ENCODE measurements at regions of chr3 and their contacts with region 1.

Region 1: DNA sequence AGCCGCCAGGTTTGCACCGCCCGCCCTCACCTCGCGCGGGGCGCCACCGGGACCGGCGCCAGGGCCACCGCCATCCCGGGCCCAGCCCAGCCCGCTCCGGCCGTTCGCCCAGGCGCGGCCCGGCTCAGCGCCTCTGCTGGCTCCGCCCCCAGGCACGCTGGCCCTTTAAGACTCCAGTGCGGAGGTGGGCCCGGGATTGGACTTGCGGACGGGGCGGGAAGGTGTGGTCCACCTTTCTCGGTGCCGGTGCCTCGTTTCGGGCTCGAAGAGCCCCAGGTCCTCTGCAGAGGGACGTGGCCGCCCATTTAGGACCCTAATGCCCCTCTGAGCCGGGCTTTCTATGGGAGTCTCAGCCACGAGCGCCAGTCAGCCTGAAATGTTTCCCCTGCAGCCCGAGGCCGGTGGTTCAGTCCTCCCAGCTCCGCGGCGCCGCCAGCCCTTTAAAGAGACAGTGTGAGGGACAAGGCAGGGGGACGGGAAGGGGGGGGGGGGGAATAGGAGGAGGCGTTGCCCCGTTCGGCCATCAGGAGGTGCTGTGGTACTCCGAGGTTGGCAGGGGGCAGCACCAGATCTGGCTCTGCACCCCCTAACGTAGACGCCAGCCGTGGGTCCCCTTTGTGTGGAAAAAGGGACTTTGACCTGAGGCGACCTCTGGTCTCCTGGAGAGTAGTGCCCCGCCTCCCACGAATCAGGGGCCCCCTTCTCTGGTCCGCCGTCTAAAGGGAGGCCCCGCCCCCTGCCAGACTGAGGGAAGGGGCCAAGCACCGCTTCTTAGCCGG is 1.0 kb downstream of the HYAL2 start:
- DNase-seq: peak; percentile 90
- ATAC-seq: peak; percentile 79
- H3K4me3 Mint-ChIP-seq: peak overlapping the region; percentile 84
- H3K27ac Mint-ChIP-seq: peak overlapping the region; percentile 85
- H3K4me1 Mint-ChIP-seq: peaks cover 38% of the 10 kb centered on the region
- H3K27me3 Mint-ChIP-seq: no peaks in the 10 kb centered on the region

Region 2: DNA sequence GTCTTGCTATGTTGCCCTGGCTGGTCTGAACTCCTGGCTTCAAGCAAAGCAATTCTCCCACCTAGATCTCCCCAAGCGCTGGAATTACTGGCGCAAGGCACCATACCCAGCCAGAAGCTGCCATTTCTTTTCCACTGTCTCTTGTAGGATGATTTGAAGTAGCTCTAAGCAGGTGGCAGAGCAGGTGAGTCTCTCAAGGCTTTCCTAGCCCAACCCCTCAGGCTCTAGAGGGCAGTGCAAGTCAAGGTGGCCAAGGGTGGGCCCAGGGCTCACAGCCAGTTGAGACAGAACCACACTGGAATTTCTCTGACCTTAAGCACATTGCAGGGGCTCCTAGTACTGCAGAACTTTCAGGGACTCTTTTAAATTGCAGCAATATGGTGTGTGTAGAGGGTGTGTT is 867.1 kb before region 1 on chr3:
- CTCF ChIA-PET with region 1: no interaction called
- POLR2A ChIA-PET with region 1: no interaction called
- intact Hi-C with region 1: no loop called
- DNase-seq: no peak
- ATAC-seq: no peak
- H3K4me3 Mint-ChIP-seq: no peak overlapping the region
- H3K27ac Mint-ChIP-seq: no peak overlapping the region
- H3K4me1 Mint-ChIP-seq: no peaks in the 10 kb centered on the region
- H3K27me3 Mint-ChIP-seq: no peaks in the 10 kb centered on the region

Region 3: DNA sequence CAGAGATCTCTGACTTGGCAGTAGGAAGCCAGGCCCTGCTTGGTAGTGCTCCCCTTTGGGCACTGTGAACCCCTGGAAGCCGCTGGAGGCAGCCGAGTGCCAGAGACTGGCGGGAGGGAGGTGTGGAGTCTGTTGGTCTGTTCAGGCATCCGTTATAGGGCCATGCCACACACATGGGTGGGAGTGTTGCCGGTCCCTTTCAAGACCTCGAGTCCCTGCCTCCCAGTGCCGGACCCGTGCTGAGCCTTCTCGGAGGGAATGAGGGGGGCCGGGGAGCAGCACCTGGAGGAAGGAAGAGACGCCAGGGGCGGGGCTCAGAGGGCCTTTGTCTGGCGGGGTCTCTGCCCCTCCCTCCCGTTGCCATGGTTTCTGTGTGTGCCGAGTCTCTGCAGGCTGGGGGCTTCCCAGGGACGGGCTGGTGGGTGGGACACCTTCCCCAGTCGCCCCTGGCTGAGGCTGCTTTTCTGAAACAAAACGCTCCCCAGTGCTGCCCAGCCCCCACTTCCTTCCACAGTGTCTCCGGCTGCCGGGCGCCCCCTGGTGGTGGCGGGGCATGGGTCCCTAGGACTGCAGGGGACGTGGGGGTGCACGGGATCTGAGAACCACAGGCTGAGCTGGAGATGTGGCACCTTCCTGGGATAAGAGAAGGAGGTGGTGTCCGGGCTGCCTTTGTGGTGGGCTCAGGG is 75.6 kb before region 1 on chr3:
- CTCF ChIA-PET with region 1: interaction called, 8 read pairs
- POLR2A ChIA-PET with region 1: interaction called, 3 read pairs
- intact Hi-C with region 1: loop called in 1 of 2 experiments (anchors 1 kb)
- DNase-seq: peak; percentile 98
- ATAC-seq: peak; percentile 76
- H3K4me3 Mint-ChIP-seq: peak overlapping the region; percentile 75
- H3K27ac Mint-ChIP-seq: peak overlapping the region; percentile 95
- H3K4me1 Mint-ChIP-seq: peaks cover 84% of the 10 kb centered on the region
- H3K27me3 Mint-ChIP-seq: no peaks in the 10 kb centered on the region

Region 4: GRCh38 chr3:50272911-50273693 is 48.4 kb before region 1 on chr3:
- CTCF ChIA-PET with region 1: interaction called, 3 read pairs
- POLR2A ChIA-PET with region 1: no interaction called
- intact Hi-C with region 1: loop called (anchors 1 to 10 kb)
- DNase-seq: peak; percentile 96
- ATAC-seq: peak; percentile 87
- H3K4me3 Mint-ChIP-seq: peak overlapping the region; percentile 68
- H3K27ac Mint-ChIP-seq: peak overlapping the region; percentile 58
- H3K4me1 Mint-ChIP-seq: peaks cover 25% of the 10 kb centered on the region
- H3K27me3 Mint-ChIP-seq: peaks cover 37% of the 10 kb centered on the region

Region 5: DNA sequence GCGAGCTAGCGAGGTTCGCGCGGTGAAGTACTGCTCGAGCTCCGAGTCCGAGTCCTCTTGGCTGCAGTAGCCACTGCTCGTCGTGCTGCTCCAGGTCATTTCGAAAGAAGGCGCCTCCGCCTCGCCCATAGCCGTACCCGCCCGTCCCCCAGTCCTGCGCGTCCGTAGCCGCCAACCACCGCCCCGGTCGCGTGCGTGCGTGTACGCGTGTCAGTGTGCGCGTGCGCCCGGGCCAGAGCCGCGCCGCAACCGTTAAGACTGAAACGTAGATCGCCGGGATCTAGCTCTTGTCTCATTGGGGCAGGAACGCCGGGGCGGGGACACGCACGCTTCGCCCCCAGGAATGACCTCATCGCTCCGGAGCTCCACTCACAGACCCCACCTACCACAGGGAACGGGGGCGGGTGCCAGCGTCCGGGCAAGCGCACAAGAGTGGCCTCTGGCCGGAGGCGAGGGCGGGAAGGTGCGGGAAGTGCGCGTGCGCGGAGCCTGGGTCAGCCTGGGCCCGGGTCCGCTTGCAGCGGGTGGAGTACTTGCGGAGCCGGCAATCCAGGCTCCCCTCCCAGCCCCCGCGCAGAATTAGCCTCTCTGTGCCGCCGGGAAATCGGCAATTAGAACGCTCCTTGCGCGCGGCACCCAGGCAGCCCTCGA is 15.8 kb after region 1 on chr3:
- CTCF ChIA-PET with region 1: interaction called, 27 read pairs
- POLR2A ChIA-PET with region 1: interaction called, 4 read pairs
- intact Hi-C with region 1: loop called (anchors 1 to 2 kb)
- DNase-seq: peak; percentile 99
- ATAC-seq: peak; percentile 82
- H3K4me3 Mint-ChIP-seq: peak overlapping the region; percentile 83
- H3K27ac Mint-ChIP-seq: peak overlapping the region; percentile 91
- H3K4me1 Mint-ChIP-seq: peaks cover 50% of the 10 kb centered on the region
- H3K27me3 Mint-ChIP-seq: no peaks in the 10 kb centered on the region

Region 6: DNA sequence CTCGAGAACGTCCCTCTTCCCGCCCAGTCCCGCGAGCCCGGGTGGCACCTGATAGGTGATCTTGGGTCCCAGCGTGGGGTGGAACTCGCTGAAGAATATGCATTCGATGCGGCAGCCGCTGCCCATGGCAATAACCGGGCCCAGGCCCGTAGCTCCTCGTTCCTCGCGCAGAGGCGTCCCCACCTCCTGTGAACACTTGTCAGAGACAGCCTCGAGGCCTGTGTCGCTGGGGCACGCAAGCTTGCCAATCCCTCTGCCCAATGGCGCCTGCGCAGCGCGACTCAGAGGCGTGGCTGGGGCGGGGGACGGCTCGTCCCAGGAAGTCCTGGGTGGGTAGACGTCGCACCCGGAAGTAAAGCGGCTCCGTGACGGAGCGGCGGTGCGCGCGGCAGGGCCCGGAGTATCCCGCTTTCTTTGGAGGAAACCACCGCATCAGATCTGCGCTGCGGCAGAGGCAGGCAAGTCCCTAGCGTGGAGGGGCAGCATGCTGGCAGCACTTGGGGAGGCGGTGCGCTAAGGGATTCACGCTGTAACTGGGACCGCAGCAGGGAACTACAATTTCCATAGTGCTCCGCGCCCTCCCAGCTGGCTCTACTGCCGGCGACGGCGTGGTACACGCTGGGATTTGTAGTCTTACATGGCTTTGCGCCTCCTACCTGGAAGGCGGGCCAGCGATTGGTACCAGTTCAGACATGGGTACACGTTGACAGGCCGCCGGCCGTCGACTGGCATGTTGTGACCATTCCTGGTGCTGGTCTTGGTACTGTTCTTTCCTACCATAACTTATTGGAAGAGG is 29.2 kb after region 1 on chr3 and contains the starts of genes CYB561D2 and NPRL2:
- CTCF ChIA-PET with region 1: interaction called, 8 read pairs
- POLR2A ChIA-PET with region 1: no interaction called
- intact Hi-C with region 1: loop called in 1 of 2 experiments (anchors 1 kb)
- DNase-seq: peak; percentile 99
- ATAC-seq: peak; percentile 90
- H3K4me3 Mint-ChIP-seq: peak within 1 kb of the TSS; percentile 90
- H3K27ac Mint-ChIP-seq: peak within 1 kb of the TSS; percentile 97
- H3K4me1 Mint-ChIP-seq: peaks cover 55% of the 10 kb centered on the region
- H3K27me3 Mint-ChIP-seq: no peaks in the 10 kb centered on the region
- total RNA-seq, gene CYB561D2: 10.3 to 14.3 TPM
- total RNA-seq, gene NPRL2: 42.5 to 43.0 TPM

Region 7: GRCh38 chr3:50358911-50359759 is 37.6 kb after region 1 on chr3 and contains the start of gene TMEM115:
- CTCF ChIA-PET with region 1: no interaction called
- POLR2A ChIA-PET with region 1: no interaction called
- intact Hi-C with region 1: loop called in 1 of 2 experiments (anchors 1 kb)
- DNase-seq: peak; percentile 97
- ATAC-seq: peak; percentile 100
- H3K4me3 Mint-ChIP-seq: peak within 1 kb of the TSS; percentile 91
- H3K27ac Mint-ChIP-seq: peak within 1 kb of the TSS; percentile 94
- H3K4me1 Mint-ChIP-seq: peaks cover 37% of the 10 kb centered on the region
- H3K27me3 Mint-ChIP-seq: no peaks in the 10 kb centered on the region
- total RNA-seq, gene TMEM115: 13.1 to 16.1 TPM

Region 8: GRCh38 chr3:50365080-50365841 is 43.7 kb after region 1 on chr3:
- CTCF ChIA-PET with region 1: no interaction called
- POLR2A ChIA-PET with region 1: no interaction called
- intact Hi-C with region 1: loop called in 1 of 2 experiments (anchors 1 kb)
- DNase-seq: peak; percentile 98
- ATAC-seq: peak; percentile 99
- H3K4me3 Mint-ChIP-seq: peak overlapping the region; percentile 72
- H3K27ac Mint-ChIP-seq: peak overlapping the region; percentile 74
- H3K4me1 Mint-ChIP-seq: peaks cover 13% of the 10 kb centered on the region
- H3K27me3 Mint-ChIP-seq: no peaks in the 10 kb centered on the region

Measured in activated CD4-positive, alpha-beta T cell treated with anti-CD3 and anti-CD28 coated beads for 36 hours (primary cell).